ENCODE measurements at regions of chr12 and their contacts with region 1.

Region 1: DNA sequence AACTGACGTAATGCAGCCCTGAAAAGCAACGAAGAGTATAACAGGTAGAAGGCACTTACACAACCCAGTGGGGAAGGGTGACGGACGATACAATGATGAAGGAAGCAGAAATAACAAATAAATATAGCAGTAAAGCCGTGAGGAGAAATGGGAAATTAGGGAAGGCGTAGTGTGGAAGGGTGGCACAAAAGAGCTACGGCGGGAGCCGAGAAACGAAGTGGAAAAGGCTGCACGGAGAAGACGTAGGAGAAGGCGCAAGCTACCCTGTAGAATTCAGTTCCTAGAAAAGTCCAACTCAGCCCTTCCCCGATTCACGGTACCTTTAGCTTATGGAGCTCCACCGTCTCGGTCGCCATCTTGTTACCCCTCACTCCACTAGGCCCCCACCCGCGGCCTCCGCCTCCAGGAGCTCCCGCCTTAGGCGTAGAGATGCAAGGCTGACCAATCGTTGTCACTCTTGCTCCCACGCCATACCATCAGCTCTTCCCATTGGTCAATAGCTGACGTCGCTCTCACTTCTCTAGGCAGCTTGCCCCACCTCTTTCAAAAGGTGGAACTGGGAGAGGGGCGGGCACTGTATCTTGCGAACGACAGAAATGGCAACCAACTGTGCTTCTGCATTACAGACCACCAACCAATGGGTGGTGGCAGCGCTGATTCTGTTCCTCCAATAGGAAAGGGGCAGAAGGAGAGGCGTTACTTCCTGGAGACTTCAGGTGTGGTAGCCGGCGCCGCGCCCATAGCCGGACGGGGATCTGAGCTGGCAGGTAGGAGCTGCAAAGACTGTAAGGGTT is at the starts of genes ORMDL2 and SARNP:
- DNase-seq: peak; percentile 99
- ATAC-seq: peak; percentile 99 to 100
- H3K4me3 ChIP-seq: peak within 1 kb of the TSS; percentile 73 to 96 (median 82)
- H3K27ac ChIP-seq: peak within 1 kb of the TSS; percentile 89 to 93 (median 90)
- H3K4me1 ChIP-seq: peaks cover 22 to 31% of the 10 kb centered on the region in 2 donors
- H3K27me3 ChIP-seq: no peaks in the 10 kb centered on the region
- CTCF ChIP-seq: no peak
- POLR2A ChIP-seq: peak; percentile 59 to 70
- total RNA-seq, gene ORMDL2: 6.6 to 23.1 (median 12.1) TPM
- total RNA-seq, gene SARNP: 46.5 to 66.2 (median 62.8) TPM

Region 2: GRCh38 chr12:54984658-54985376 is 832.7 kb before region 1 on chr12 and contains the start of gene TESPA1:
- in situ Hi-C with region 1: no loop called
- intact Hi-C with region 1: no loop called
- DNase-seq: peak; percentile 23 to 35
- ATAC-seq: no peak
- H3K4me3 ChIP-seq: no peak within 1 kb of the TSS
- H3K27ac ChIP-seq: no peak within 1 kb of the TSS
- H3K4me1 ChIP-seq: peaks cover 0 to 4% of the 10 kb centered on the region in 2 donors
- H3K27me3 ChIP-seq: no peaks in the 10 kb centered on the region
- CTCF ChIP-seq: no peak
- POLR2A ChIP-seq: no peak
- total RNA-seq, gene TESPA1: 0.94 to 1.1 TPM in 2 of 4 donors, not detected in the others

Region 3: GRCh38 chr12:55659486-55660385 is 157.8 kb before region 1 on chr12:
- in situ Hi-C with region 1: loop called in 1 of 4 experiments (anchors 25 kb)
- intact Hi-C with region 1: loop called (anchors 10 kb)
- DNase-seq: peak; percentile 41 to 49
- ATAC-seq: peak; percentile 83 to 85
- H3K4me3 ChIP-seq: no peak overlapping the region
- H3K27ac ChIP-seq: peak overlapping the region; percentile 78 to 84 (median 82)
- H3K4me1 ChIP-seq: peaks cover 15 to 22% of the 10 kb centered on the region in 2 donors
- H3K27me3 ChIP-seq: no peaks in the 10 kb centered on the region
- CTCF ChIP-seq: peak in 2 of 5 experiments; percentile 27 to 47
- POLR2A ChIP-seq: no peak

Region 4: GRCh38 chr12:55738123-55739024 is 79.2 kb before region 1 on chr12:
- in situ Hi-C with region 1: loop called in 2 of 4 experiments (anchors 5 to 10 kb)
- intact Hi-C with region 1: no loop called
- DNase-seq: no peak
- ATAC-seq: peak; percentile 70 to 79
- H3K4me3 ChIP-seq: peak overlapping the region; percentile 48 to 63 (median 59)
- H3K27ac ChIP-seq: peak overlapping the region; percentile 28 to 50 (median 46)
- H3K4me1 ChIP-seq: peaks cover 6 to 11% of the 10 kb centered on the region in 2 donors
- H3K27me3 ChIP-seq: no peaks in the 10 kb centered on the region
- CTCF ChIP-seq: peak; percentile 80 to 96 (median 85)
- POLR2A ChIP-seq: no peak

Region 5: DNA sequence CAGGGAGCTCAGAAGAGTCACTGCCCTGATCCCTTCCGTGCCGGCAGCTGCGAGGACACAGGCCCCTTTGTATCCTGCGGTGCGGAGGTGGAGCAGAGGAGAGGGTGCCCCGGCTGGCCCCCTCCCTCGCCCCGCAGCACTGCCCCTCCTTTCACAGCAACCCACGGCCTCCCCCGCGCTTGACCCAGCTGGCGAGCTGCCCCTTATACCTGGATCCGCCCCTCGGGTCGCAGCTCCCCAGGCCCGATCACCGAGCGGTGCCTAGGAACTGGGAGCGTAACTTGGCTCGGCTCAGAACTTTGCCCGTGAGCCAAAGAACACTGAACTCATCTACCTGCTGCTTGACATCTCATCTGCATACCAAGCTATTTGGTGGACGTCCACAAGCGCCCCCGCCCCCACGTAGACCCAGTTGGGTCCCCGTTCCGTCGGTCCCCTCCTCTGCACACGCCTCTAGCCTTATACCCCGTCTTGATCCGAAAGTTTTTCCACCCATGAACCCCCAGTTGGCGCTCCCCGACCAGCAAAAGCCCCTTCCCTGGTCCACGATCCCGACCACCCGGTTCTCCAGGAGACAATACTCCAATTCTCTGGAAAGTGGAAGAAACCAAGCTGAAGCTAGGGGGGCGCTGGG is 12.5 kb after region 1 on chr12:
- in situ Hi-C with region 1: no loop called
- intact Hi-C with region 1: loop called (anchors 1 kb)
- DNase-seq: no peak
- ATAC-seq: peak in 1 of 2 donors; percentile 8
- H3K4me3 ChIP-seq: peak overlapping the region; percentile 85 to 97 (median 96)
- H3K27ac ChIP-seq: peak overlapping the region; percentile 82 to 89 (median 88)
- H3K4me1 ChIP-seq: peaks cover 33 to 39% of the 10 kb centered on the region in 2 donors
- H3K27me3 ChIP-seq: no peaks in the 10 kb centered on the region
- CTCF ChIP-seq: no peak
- POLR2A ChIP-seq: no peak

Region 6: DNA sequence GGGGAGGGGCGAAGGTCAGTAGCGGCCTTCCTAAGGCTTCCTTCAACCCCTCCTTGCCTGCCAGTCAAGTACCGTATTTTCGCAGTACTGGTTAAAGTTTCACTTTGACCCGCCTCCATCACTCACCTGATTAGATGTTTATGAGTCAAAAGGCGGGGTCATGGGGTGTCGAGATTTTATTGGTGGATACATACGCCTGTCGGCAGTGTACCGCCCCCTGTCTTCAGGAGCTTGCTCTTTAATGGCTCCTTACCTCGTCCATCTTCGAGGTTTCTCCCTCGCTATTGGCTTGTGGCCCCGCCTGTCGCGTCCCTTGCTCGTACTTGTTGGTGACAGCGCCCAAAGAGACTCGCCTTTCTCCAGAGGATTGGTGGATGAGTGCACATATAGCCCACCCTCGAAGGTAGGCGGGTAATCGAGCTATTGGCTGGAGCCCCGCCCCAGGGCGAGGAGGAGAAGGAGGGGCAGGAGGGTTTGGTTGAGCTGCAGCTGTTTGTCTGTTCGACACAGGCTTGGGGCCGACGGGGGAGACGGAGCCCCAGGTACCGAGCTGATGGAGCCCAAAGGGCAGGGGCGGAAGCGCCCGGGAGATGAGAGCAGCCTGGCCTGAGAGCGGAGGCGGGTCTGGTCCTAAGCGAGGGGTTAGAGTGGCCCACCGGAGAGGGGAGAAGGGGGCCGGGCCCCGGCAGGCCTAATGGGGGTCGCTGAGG is 156.2 kb after region 1 on chr12 and contains the start of gene RAB5B:
- in situ Hi-C with region 1: no loop called
- intact Hi-C with region 1: loop called (anchors 5 kb)
- DNase-seq: peak; percentile 100
- ATAC-seq: peak; percentile 90 to 96
- H3K4me3 ChIP-seq: peak within 1 kb of the TSS; percentile 86 to 100 (median 98)
- H3K27ac ChIP-seq: peak within 1 kb of the TSS; percentile 95 to 100 (median 98)
- H3K4me1 ChIP-seq: peaks cover 28 to 36% of the 10 kb centered on the region in 2 donors
- H3K27me3 ChIP-seq: no peaks in the 10 kb centered on the region
- CTCF ChIP-seq: peak in 3 of 5 experiments; percentile 14 to 60 (median 37)
- POLR2A ChIP-seq: peak; percentile 97
- total RNA-seq, gene RAB5B: 75.5 to 84.9 (median 81.8) TPM

Region 7: DNA sequence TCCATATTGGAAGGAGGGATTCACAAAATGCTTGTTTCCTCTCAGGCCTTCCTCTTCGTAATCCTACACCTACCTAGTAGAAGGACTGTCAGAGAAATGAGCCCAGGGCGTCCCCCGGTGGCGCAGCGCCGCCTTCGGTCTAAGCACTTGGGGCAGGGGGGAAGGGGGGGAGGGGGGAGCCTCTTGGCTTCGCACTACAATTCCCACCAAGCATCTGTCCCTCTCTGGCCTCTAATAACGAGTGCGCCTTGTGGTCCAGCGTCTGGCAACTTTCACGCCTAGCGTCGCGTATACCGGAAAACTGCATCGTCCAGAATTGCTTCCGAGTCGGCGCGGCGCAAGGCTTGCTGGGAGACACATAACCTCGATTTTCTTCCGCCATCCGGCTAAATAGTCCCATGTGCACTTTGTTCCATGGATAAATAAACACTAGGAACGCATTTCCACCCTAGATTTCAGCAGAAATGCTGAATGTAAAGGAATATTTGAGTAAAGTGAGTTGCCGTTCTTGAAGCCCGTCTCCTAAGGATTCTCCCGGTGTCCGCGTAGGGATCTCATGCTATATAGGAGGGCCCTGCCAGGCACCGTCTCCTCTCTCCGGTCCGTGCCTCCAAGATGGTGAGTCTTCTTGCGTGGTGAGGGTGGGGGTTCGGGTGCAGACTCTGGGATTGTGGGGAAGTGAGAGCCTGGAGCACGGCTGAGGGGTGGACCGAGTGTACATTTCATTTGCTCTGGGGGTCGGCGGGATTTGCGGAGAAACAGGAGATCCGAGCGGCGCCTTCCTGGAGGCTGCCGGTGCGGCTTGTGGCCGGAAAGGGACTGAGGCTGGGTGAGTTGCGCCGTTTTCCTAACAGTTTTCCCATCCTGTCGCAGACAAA is 224.2 kb after region 1 on chr12 and contains the start of gene RPS26:
- in situ Hi-C with region 1: no loop called
- intact Hi-C with region 1: loop called (anchors 1 kb)
- DNase-seq: peak; percentile 96 to 97
- ATAC-seq: peak; percentile 98 to 99
- H3K4me3 ChIP-seq: peak within 1 kb of the TSS; percentile 66 to 94 (median 86)
- H3K27ac ChIP-seq: peak within 1 kb of the TSS; percentile 87 to 98 (median 94)
- H3K4me1 ChIP-seq: peaks cover 15 to 19% of the 10 kb centered on the region in 2 donors
- H3K27me3 ChIP-seq: no peaks in the 10 kb centered on the region
- CTCF ChIP-seq: peak; percentile 11 to 70 (median 40)
- POLR2A ChIP-seq: peak; percentile 86 to 90
- total RNA-seq, gene RPS26: 618 to 1,648 (median 1,209) TPM

Region 8: GRCh38 chr12:56104109-56104814 is 286.7 kb after region 1 on chr12 and contains the start of gene PA2G4:
- in situ Hi-C with region 1: no loop called
- intact Hi-C with region 1: loop called (anchors 10 kb)
- DNase-seq: peak; percentile 98
- ATAC-seq: peak; percentile 95 to 96
- H3K4me3 ChIP-seq: peak within 1 kb of the TSS; percentile 77 to 98 (median 84)
- H3K27ac ChIP-seq: peak within 1 kb of the TSS; percentile 85 to 93 (median 92)
- H3K4me1 ChIP-seq: peaks cover 20 to 26% of the 10 kb centered on the region in 2 donors
- H3K27me3 ChIP-seq: no peaks in the 10 kb centered on the region
- CTCF ChIP-seq: no peak
- POLR2A ChIP-seq: peak; percentile 85 to 96
- total RNA-seq, gene PA2G4: 109 to 204 (median 127) TPM

Measured in gastrocnemius medialis (tissue), 4 donors.